Caco-2 (cell line): ENCODE measurements at regions of chr17 and their contacts with region 1.

Region 1: DNA sequence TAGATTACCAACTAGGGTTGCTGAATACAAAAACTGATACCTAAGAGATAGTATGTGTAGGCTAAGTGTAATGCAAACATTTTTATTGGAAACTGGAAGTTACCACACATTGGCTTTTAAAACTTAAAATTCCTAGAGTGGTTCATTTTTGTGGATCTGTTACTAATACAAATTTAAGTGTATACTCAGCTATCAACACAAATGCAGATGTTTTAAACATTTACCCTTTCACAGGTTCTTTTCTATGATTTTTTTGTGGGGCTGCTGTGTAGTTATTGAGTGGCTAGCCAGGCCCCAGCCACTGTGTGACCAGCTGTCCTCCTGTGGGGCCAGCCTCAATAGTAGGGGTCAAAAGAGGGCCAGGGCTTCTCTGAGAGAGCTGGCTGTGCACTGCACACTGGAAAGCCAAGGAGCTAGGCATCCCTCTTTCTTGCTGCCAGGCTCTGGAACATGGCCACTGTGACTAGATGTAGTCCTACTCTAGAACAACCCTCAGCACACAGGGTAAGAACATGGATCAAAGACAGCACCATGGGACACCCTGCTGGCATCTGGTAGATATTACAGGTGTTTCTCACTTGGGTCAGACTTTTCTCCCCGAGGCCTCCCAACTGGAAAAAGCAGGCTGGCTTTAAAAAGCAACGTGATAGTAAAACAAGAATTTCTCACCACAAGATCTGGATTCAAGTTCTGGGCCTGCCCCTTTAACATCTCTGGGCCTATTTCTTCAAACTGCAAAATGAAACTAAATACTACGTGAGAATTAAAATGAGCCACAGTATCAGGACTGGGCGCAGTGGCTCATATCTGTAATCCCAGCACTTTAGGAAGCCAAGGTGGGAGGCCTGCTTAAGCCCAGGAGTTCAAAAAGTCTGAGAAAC is 7.3 kb upstream of the VEZF1 start:
- DNase-seq: peak; percentile 77 to 80
- H3K4me3 ChIP-seq: no peak overlapping the region
- H3K4me3 Mint-ChIP-seq: no peak overlapping the region
- H3K27ac Mint-ChIP-seq: peak overlapping the region; percentile 12
- H3K4me1 ChIP-seq: peaks cover 31% of the 10 kb centered on the region
- H3K4me1 Mint-ChIP-seq: peaks cover 28% of the 10 kb centered on the region
- H3K27me3 ChIP-seq: no peaks in the 10 kb centered on the region
- H3K27me3 Mint-ChIP-seq: no peaks in the 10 kb centered on the region
- CTCF ChIP-seq: peak; percentile 77 to 83

Region 2: DNA sequence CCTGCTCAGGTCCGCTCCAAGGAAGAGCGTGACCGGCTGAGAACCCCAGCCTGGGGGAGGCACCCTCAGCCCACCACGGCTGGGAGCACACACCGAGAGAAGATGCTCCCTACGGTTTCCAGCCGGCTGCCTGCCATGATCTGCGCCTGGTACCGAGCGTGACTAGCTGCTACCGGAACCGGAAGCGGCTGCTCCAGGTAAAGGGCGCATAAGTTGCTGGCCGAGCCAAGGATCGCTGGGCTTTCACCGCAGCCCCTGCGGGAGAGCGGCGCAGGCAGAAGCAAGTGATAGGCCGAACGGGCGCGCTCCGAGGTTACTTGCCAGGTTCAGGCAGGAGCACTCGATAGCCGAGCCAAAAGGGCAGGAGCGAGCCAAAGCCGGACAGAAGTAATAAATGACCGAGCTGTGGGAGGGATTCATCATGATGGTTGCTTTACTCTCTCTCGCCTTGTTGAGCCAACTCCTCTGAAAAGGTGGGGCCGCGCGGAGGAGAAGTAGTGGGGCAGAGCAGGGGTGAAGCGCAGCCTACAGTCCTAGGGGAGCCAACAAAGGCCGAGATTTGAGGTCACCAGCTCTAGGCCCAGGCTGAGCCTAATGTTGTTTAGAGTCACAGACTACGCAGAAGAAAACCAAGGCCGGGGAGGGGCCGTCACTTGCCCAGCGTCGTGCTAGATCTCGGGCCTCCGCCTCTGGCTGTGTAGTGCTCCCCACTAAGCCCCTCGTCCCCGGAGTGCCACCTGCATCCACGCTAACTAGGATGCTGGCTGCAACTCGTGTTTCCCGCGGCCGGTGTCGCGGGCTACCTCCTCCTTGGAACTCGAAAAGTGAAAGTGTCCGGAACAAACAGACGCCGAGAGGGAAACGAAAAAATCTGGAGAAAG is 145.2 kb before region 1 on chr17 and contains the start of gene MRPS23:
- CTCF ChIA-PET with region 1: interaction called, 10 read pairs
- POLR2A ChIA-PET with region 1: interaction called, 5 read pairs
- intact Hi-C with region 1: loop called (anchors 2 kb)
- DNase-seq: peak; percentile 98 to 99
- H3K4me3 ChIP-seq: peak within 1 kb of the TSS; percentile 84
- H3K4me3 Mint-ChIP-seq: peak within 1 kb of the TSS; percentile 92
- H3K27ac Mint-ChIP-seq: peak within 1 kb of the TSS; percentile 94
- H3K4me1 ChIP-seq: peaks cover 20% of the 10 kb centered on the region
- H3K4me1 Mint-ChIP-seq: peaks cover 31% of the 10 kb centered on the region
- H3K27me3 ChIP-seq: no peaks in the 10 kb centered on the region
- H3K27me3 Mint-ChIP-seq: no peaks in the 10 kb centered on the region
- CTCF ChIP-seq: no peak
- total RNA-seq, gene MRPS23: 72.9 and 75.1 TPM in 2 replicates

Region 3: DNA sequence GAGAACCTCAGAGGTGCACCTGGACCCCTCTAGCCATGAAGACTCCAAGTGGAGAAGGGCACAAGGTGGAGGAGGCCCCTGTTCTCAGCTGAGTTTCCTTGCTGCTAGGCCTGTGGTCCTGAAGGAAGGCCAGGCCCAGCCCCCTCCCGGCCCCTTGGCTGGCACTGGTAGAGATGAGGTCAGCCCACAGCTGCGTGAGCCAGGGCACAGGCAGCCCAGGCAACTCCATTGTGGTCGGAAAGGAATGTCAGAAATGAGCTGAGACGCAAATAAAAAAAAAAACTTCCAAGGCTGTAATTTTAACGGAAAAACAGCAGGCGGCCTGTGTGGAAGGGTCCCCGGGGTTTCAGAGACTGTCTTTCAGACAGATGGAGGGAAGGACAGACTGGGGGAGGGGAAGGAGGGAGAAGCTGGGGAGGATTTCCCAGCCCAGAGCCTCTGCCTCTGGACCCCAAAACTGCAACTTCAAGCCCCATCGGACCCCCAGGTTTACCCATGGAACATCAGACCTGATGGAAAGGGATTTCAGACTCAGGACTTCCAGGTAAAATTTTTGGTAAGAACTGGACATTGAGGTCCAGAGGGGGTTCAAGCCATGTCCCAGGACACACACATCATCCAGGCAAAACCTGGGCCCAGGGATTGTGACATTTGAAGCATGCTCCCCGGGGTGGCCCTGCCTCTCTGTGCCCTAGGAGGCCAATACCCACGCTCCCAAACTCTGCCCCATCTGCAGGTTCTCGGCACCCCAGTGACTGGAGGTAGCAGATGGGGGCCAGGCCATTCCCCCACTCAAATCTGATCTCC is 119.8 kb before region 1 on chr17:
- CTCF ChIA-PET with region 1: interaction called, 16 read pairs
- POLR2A ChIA-PET with region 1: interaction called, 3 read pairs
- intact Hi-C with region 1: loop called (anchors 1 kb)
- DNase-seq: peak; percentile 72 to 76
- H3K4me3 ChIP-seq: no peak overlapping the region
- H3K4me3 Mint-ChIP-seq: no peak overlapping the region
- H3K27ac Mint-ChIP-seq: peak overlapping the region; percentile 89
- H3K4me1 ChIP-seq: peaks cover 34% of the 10 kb centered on the region
- H3K4me1 Mint-ChIP-seq: peaks cover 36% of the 10 kb centered on the region
- H3K27me3 ChIP-seq: no peaks in the 10 kb centered on the region
- H3K27me3 Mint-ChIP-seq: no peaks in the 10 kb centered on the region
- CTCF ChIP-seq: peak; percentile 33 to 36

Region 4: GRCh38 chr17:58112970-58113631 is 117.8 kb after region 1 on chr17:
- CTCF ChIA-PET with region 1: interaction called, 4 read pairs
- POLR2A ChIA-PET with region 1: no interaction called
- intact Hi-C with region 1: loop called (anchors 1 kb)
- DNase-seq: peak; percentile 78 to 88
- H3K4me3 ChIP-seq: no peak overlapping the region
- H3K4me3 Mint-ChIP-seq: no peak overlapping the region
- H3K27ac Mint-ChIP-seq: no peak overlapping the region
- H3K4me1 ChIP-seq: no peaks in the 10 kb centered on the region
- H3K4me1 Mint-ChIP-seq: no peaks in the 10 kb centered on the region
- H3K27me3 ChIP-seq: no peaks in the 10 kb centered on the region
- H3K27me3 Mint-ChIP-seq: peaks cover 8% of the 10 kb centered on the region
- CTCF ChIP-seq: peak; percentile 92 to 97